ENCODE measurements at regions of chr20 and their contacts with region 1.

Region 1: DNA sequence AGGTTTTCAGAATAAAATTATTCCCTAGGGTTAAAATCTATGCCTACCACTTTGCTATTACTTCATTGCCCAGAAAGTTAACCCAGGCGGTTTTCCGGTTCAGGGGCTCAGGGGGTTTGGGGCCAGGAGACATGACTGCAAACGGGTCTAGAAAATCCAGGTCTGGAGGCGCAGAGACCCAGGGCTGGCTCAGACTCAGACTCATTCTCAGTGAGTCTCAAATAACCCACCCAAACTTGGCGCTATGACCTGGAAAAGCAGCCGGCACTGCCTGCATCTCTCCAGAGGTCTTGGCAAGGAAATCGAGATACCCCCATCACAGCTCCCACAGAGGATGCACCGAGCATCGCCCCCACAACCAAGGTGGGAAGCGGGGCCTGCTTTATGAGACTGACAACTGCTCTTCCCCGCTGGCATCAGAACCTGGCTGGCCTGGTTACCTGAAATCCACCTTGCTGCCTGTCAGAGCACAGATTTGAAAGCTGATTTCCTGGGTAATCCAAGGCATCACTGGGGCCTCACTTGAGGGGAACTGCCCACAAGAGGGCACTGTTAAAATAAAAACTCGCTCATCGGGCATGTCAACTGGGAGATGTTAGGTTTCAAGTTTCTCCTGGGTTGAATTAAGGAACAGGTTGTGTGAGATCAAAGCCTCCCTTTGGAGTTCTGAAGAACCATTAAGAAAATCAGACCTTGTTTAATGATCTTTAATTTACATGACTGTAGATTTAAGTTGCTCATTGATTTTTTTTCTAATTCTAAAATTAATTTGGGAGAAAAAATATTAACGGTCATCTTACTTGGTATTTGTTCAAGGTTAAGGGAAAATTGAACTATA is 55.1 kb downstream of the KIF16B start:
- DNase-seq: peak in 2 of 9 experiments; percentile 19 to 27
- ATAC-seq: no peak
- H3K4me3 ChIP-seq: no peak overlapping the region
- H3K4me3 Mint-ChIP-seq: no peak overlapping the region
- H3K27ac ChIP-seq: no peak overlapping the region
- H3K27ac Mint-ChIP-seq: no peak overlapping the region
- H3K4me1 ChIP-seq: no peaks in the 10 kb centered on the region
- H3K4me1 Mint-ChIP-seq: no peaks in the 10 kb centered on the region
- H3K27me3 ChIP-seq: no peaks in the 10 kb centered on the region
- H3K27me3 Mint-ChIP-seq: no peaks in the 10 kb centered on the region
- CTCF ChIP-seq: peak; percentile 21

Region 2: DNA sequence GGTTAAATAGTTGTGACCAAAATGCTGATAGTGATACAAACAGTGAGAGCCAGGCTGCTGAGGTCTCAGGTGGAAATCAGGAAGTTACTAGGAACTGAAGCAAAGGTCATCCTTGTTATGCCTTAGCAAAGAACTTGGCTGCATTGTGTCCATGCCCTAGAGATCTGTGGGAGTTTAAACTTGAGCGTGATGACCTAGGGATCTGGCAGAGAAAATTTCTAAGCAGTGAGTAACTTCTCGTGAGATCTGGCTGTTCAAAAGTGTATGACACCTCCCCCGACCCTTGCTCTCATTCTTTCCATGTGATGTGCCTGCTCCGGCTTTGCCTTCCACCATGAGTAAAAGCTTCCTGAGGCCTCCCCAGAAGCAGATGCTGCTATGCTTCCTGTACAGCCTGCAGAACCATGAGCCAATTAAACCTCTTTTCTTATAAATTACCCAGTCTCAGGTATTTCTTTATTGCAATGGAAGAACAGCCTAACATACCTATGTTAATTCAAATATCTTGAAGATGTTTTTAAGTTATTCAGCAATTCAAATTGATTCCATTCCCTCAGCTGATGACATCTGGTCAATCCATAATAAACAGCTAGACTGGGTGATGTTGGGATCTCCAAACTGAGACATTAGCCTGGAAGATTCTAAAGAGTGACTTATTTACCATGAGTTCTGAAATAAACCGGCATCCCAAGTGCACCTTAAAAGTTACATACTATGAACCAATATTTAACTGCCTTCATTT is 21.3 kb after region 1 on chr20:
- CTCF ChIA-PET with region 1: no interaction called
- POLR2A ChIA-PET with region 1: no interaction called
- intact Hi-C with region 1: loop called in 1 of 2 experiments (anchors 1 kb)
- DNase-seq: no peak
- ATAC-seq: no peak
- H3K4me3 ChIP-seq: no peak overlapping the region
- H3K4me3 Mint-ChIP-seq: no peak overlapping the region
- H3K27ac ChIP-seq: no peak overlapping the region
- H3K27ac Mint-ChIP-seq: no peak overlapping the region
- H3K4me1 ChIP-seq: no peaks in the 10 kb centered on the region
- H3K4me1 Mint-ChIP-seq: no peaks in the 10 kb centered on the region
- H3K27me3 ChIP-seq: no peaks in the 10 kb centered on the region
- H3K27me3 Mint-ChIP-seq: no peaks in the 10 kb centered on the region
- CTCF ChIP-seq: no peak